ENCODE measurements at regions of chr15 and their contacts with region 1.

Region 1: GRCh38 chr15:68875377-68876116 is 54.8 kb upstream of the SPESP1 start:
- DNase-seq: peak; percentile 94
- H3K4me3 Mint-ChIP-seq: no peak overlapping the region
- H3K27ac Mint-ChIP-seq: no peak overlapping the region
- H3K4me1 Mint-ChIP-seq: peaks cover 4% of the 10 kb centered on the region
- H3K27me3 Mint-ChIP-seq: peaks cover 22% of the 10 kb centered on the region

Region 2: GRCh38 chr15:68550481-68551295 is 324.9 kb before region 1 on chr15:
- CTCF ChIA-PET with region 1: interaction called, 14 read pairs
- DNase-seq: peak; percentile 86
- H3K4me3 Mint-ChIP-seq: no peak overlapping the region
- H3K27ac Mint-ChIP-seq: peak overlapping the region; percentile 16
- H3K4me1 Mint-ChIP-seq: no peaks in the 10 kb centered on the region
- H3K27me3 Mint-ChIP-seq: peaks cover 31% of the 10 kb centered on the region

Region 3: GRCh38 chr15:68559345-68560310 is 315.9 kb before region 1 on chr15:
- CTCF ChIA-PET with region 1: interaction called, 27 read pairs
- DNase-seq: peak; percentile 76
- H3K4me3 Mint-ChIP-seq: peak overlapping the region; percentile 60
- H3K27ac Mint-ChIP-seq: no peak overlapping the region
- H3K4me1 Mint-ChIP-seq: peaks cover 25% of the 10 kb centered on the region
- H3K27me3 Mint-ChIP-seq: peaks cover 81% of the 10 kb centered on the region

Region 4: GRCh38 chr15:68599560-68600071 is 275.9 kb before region 1 on chr15:
- CTCF ChIA-PET with region 1: no interaction called
- DNase-seq: no peak
- H3K4me3 Mint-ChIP-seq: no peak overlapping the region
- H3K27ac Mint-ChIP-seq: no peak overlapping the region
- H3K4me1 Mint-ChIP-seq: no peaks in the 10 kb centered on the region
- H3K27me3 Mint-ChIP-seq: peaks cover 12% of the 10 kb centered on the region

Region 5: DNA sequence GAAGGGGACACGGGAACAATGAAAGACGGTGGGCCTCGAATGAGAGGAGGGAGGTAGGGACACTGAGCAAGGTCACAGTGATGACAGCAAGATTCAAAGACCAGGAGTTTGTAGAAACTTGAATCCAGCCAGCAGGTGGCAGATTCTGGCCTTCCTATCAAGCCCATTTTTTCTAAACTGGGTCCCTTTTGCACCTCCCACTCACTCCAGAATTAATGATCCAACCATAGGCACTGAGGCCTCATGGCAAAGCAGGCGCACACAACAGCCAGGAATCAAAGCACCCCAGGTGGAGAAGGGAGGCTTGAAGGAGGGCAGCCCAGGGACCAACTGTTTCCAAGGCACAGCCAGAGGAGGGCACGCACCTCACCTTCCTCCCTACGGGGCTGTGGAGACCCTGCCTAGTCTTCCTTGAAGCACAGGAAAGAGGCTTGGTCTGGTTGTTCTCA is 145.1 kb before region 1 on chr15:
- CTCF ChIA-PET with region 1: interaction called, 46 read pairs
- DNase-seq: peak; percentile 47
- H3K4me3 Mint-ChIP-seq: no peak overlapping the region
- H3K27ac Mint-ChIP-seq: no peak overlapping the region
- H3K4me1 Mint-ChIP-seq: no peaks in the 10 kb centered on the region
- H3K27me3 Mint-ChIP-seq: peaks cover 12% of the 10 kb centered on the region

Region 6: GRCh38 chr15:68783226-68784058 is 92.1 kb before region 1 on chr15:
- CTCF ChIA-PET with region 1: interaction called, 42 read pairs
- DNase-seq: peak; percentile 78
- H3K4me3 Mint-ChIP-seq: no peak overlapping the region
- H3K27ac Mint-ChIP-seq: peak overlapping the region; percentile 59
- H3K4me1 Mint-ChIP-seq: peaks cover 36% of the 10 kb centered on the region
- H3K27me3 Mint-ChIP-seq: no peaks in the 10 kb centered on the region

Region 7: DNA sequence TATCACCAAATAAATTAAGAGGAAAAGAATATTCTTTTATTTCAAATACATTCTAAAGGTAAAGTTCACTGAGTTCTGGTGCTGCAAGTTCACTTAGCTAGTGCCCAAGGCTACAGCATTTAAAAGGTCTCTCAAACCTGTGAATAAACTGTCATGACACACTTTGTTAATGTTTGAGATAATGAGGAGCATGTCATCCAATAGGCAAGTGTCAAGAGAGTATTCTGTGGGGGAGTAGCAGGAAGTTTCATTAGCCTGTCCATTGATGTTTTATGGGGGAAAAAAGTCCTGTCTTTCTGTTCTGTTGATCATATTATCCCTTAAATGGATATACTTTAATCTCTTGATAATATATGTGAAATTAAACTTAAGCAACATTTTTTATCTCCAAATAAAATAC is 58.8 kb after region 1 on chr15:
- CTCF ChIA-PET with region 1: no interaction called
- DNase-seq: no peak
- H3K4me3 Mint-ChIP-seq: no peak overlapping the region
- H3K27ac Mint-ChIP-seq: no peak overlapping the region
- H3K4me1 Mint-ChIP-seq: peaks cover 3% of the 10 kb centered on the region
- H3K27me3 Mint-ChIP-seq: peaks cover 5% of the 10 kb centered on the region

Measured in activated naive CD4-positive, alpha-beta T cell treated with anti-CD3 and anti-CD28 coated beads, Interleukin-2, amount 10 ng/mL, durations not matched to agents 7 days and 5 days (primary cell).